Activated CD4-positive, alpha-beta memory T cell treated with anti-CD3 and anti-CD28 coated beads for 36 hours (primary cell): ENCODE measurements at regions of chr17 and their contacts with region 1.

Region 1: GRCh38 chr17:50361561-50362480 is 11.2 kb downstream of the MRPL27 start:
- DNase-seq: peak; percentile 75
- H3K4me3 Mint-ChIP-seq: no peak overlapping the region
- H3K27ac Mint-ChIP-seq: peak overlapping the region; percentile 75
- H3K4me1 Mint-ChIP-seq: peaks cover 9% of the 10 kb centered on the region
- H3K27me3 Mint-ChIP-seq: no peaks in the 10 kb centered on the region

Region 2: GRCh38 chr17:50345432-50346312 is 16.1 kb before region 1 on chr17 and contains the start of gene XYLT2:
- CTCF ChIA-PET with region 1: interaction called, 64 read pairs
- POLR2A ChIA-PET with region 1: interaction called, 3 read pairs
- intact Hi-C with region 1: no loop called
- DNase-seq: peak; percentile 92
- H3K4me3 Mint-ChIP-seq: peak within 1 kb of the TSS; percentile 91
- H3K27ac Mint-ChIP-seq: peak within 1 kb of the TSS; percentile 91
- H3K4me1 Mint-ChIP-seq: peaks cover 38% of the 10 kb centered on the region
- H3K27me3 Mint-ChIP-seq: no peaks in the 10 kb centered on the region
- total RNA-seq, gene XYLT2: 41.3 to 43.3 TPM

Region 3: DNA sequence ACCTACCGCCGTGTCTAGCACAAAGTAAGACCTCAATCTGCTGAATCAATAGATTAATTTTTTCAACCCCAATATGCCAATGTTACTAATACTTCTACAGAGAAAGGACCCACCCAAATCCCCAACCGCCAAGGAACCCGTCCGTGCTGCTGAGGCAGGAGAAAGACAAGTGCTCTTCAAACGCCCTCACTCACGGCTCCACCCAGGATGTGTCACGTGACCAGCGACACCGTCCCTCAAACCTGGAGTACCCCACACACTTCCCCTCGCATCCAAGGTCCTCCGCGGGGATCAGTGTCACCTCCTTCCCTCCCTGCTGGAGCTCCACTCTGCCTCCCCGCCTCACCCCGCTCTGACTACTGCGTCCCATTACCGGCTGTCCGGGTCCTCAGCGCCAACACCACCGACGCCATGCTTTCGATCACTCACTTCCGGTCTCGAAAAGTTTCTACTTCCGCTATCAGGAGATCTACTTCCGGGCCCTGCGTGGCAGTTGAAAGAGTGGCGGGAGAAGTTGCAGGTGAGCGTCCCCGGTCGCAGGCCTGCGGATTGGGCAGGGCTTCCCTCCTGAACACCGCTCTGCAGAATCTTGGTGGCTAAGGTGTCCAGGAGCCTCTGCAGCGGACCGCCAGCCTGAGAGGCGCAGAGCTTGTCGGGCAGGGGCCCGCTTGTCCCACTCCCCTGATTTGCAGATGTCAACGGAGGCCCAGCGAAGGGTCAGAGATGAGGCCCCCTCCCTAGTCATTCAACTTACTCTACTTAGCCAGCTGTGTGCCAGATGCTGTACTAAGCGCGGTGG is 11.1 kb after region 1 on chr17 and contains the starts of genes EME1 and MRPL27:
- CTCF ChIA-PET with region 1: interaction called, 50 read pairs
- POLR2A ChIA-PET with region 1: interaction called, 5 read pairs
- intact Hi-C with region 1: no loop called
- DNase-seq: peak; percentile 90
- H3K4me3 Mint-ChIP-seq: peak within 1 kb of the TSS; percentile 97
- H3K27ac Mint-ChIP-seq: peak within 1 kb of the TSS; percentile 99
- H3K4me1 Mint-ChIP-seq: peaks cover 28% of the 10 kb centered on the region
- H3K27me3 Mint-ChIP-seq: no peaks in the 10 kb centered on the region
- total RNA-seq, gene EME1: 47.7 to 48.1 TPM
- total RNA-seq, gene MRPL27: 53.9 to 64.5 TPM

Region 4: DNA sequence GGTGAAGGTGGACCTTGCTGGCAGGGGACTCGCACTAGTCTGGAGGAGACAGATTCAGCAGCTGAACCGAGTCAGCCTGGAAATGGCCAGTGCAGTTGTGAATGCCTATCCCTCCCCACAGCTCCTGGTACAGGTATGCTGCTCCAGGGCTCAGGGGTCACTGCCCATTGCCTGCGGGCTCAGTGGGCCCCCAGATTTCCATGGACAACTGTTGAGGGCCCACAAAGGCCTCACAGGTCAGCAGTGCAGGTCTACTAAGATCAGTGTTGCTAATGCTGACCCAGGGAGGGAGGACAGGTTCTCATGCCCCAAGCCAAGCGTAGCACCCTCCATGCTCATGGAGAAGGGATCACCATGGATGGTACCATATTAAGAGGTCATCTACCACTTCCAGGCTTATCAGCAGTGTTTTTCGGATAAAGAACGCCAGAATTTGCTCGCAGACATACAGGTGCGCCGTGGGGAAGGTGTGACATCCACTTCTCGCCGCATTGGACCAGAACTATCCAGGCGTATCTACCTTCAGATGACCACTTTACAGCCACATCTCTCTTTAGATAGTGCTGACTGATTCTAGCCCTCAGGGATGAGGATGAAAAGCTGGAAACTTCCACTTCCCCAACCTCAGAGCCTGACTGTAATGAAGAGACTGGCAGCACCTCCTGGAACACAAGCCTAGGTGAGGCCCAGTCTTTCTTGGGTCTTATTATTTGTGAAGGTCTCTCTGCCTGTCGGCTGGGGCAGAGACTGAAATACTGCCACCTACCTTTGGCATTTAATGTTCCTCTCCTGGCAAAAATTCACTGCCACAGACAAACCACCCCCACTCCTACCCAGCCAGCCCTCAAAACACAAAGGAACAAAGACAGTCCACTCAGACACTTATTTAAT is 18.8 kb after region 1 on chr17:
- CTCF ChIA-PET with region 1: interaction called, 50 read pairs
- POLR2A ChIA-PET with region 1: no interaction called
- intact Hi-C with region 1: no loop called
- DNase-seq: no peak
- H3K4me3 Mint-ChIP-seq: no peak overlapping the region
- H3K27ac Mint-ChIP-seq: no peak overlapping the region
- H3K4me1 Mint-ChIP-seq: no peaks in the 10 kb centered on the region
- H3K27me3 Mint-ChIP-seq: no peaks in the 10 kb centered on the region

Region 5: DNA sequence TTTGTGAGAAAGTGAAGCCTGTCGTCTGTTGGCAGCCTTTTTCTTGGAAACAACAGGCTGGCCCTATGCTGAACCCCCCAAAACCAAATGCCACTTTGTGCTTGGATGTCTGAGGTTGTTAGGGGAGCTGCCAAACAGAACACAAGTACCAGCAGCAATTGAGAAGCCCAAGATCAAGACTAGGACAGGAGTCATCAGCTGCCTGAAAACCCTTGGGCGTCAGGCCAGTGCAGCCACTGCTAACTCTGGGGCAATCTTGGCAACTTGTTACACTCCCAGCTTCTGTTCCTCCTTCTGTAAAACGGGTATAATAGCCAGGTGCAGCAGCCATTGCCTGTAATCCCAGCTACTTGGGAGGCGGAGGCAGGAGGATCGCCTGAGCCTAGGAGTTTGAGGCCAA is 44.8 kb after region 1 on chr17:
- CTCF ChIA-PET with region 1: no interaction called
- POLR2A ChIA-PET with region 1: no interaction called
- intact Hi-C with region 1: no loop called
- DNase-seq: no peak
- H3K4me3 Mint-ChIP-seq: no peak overlapping the region
- H3K27ac Mint-ChIP-seq: no peak overlapping the region
- H3K4me1 Mint-ChIP-seq: no peaks in the 10 kb centered on the region
- H3K27me3 Mint-ChIP-seq: peaks cover 10% of the 10 kb centered on the region

Region 6: DNA sequence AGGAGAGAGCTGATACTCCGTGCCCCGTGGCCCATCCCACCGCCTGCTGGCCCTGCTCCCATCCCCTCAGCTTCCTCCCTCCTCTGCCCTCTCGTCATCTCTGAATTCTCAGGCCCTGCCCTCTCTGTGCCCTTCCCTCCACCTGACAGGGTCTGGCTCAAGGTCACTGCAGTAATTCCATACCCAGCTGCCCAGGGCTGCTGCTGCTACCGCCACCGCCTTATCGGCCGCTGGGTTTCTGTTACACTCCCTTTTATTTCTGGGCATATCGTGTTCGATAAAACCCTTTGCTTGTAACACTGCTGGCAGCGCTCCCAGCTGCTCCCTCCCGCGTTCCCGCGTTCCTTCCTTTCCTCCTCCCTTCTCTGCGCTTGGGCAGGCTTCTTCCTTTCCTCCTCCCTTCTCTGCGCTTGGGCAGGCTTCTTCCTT is 171.9 kb after region 1 on chr17:
- CTCF ChIA-PET with region 1: no interaction called
- POLR2A ChIA-PET with region 1: no interaction called
- intact Hi-C with region 1: no loop called
- DNase-seq: no peak
- H3K4me3 Mint-ChIP-seq: no peak overlapping the region
- H3K27ac Mint-ChIP-seq: no peak overlapping the region
- H3K4me1 Mint-ChIP-seq: peaks cover 16% of the 10 kb centered on the region
- H3K27me3 Mint-ChIP-seq: peaks cover 49% of the 10 kb centered on the region